ENCODE measurements at regions of chr13 and their contacts with region 1.

Region 1: GRCh38 chr13:32905063-32905863 is 111.0 kb upstream of the KL start:
- DNase-seq: peak; percentile 3
- ATAC-seq: no peak
- H3K4me3 ChIP-seq: no peak overlapping the region
- H3K27ac ChIP-seq: no peak overlapping the region
- H3K4me1 ChIP-seq: no peaks in the 10 kb centered on the region
- H3K27me3 ChIP-seq: no peaks in the 10 kb centered on the region
- CTCF ChIP-seq: no peak
- POLR2A ChIP-seq: no peak
- RAD21 ChIP-seq: no peak

Region 2: DNA sequence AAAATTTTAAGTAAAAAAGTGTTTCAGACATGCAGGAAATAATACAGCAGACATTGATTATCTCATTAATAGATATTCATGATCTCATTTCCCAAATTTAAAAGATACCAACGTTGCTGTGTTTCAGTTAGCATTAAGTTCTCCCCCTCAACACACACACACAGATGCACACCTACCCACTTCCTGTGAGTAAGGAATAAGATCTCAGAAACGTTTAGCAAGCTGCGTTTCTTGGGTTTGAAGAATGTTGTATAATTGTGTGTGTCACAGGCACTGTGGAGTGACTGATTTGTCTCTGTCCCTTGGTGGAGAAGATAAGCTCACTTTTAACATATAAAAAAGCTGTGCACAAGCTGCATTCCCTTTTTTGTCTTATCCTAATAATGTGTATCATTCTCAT is 122.2 kb before region 1 on chr13:
- CTCF ChIA-PET with region 1: no interaction called
- POLR2A ChIA-PET with region 1: no interaction called
- dilution Hi-C with region 1: no loop called
- in situ Hi-C with region 1: no loop called
- intact Hi-C with region 1: loop called (anchors 10 kb)
- DNase-seq: peak; percentile 67
- ATAC-seq: peak; percentile 49
- H3K4me3 ChIP-seq: no peak overlapping the region
- H3K27ac ChIP-seq: no peak overlapping the region
- H3K4me1 ChIP-seq: no peaks in the 10 kb centered on the region; the same call in 1 of the 2 replicates
- H3K27me3 ChIP-seq: no peaks in the 10 kb centered on the region
- CTCF ChIP-seq: no peak
- POLR2A ChIP-seq: no peak
- RAD21 ChIP-seq: no peak

Region 3: DNA sequence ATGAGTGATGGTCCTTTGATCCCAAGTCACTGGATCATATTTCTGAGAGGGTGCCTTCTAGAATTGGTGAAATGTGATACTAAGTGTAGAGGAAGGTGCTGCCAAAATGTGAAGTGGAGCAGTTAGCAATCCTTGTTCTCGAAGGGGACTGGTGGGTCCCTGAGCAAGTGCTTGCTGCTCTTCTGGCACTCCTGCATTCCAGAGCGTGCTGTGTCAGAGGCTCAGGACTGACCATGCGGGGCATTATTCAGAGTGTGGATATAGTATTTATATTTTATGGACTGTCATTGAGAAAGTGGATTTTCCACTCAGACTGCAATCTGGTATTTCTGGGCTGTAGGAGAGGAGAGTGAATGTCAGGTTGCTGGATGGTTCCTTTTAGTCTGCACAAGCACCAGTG is 41.7 kb before region 1 on chr13:
- CTCF ChIA-PET with region 1: no interaction called
- POLR2A ChIA-PET with region 1: no interaction called
- dilution Hi-C with region 1: no loop called
- in situ Hi-C with region 1: no loop called
- intact Hi-C with region 1: no loop called
- DNase-seq: no peak
- ATAC-seq: no peak
- H3K4me3 ChIP-seq: no peak overlapping the region
- H3K27ac ChIP-seq: no peak overlapping the region
- H3K4me1 ChIP-seq: no peaks in the 10 kb centered on the region
- H3K27me3 ChIP-seq: peaks cover 3% of the 10 kb centered on the region; the same call in 1 of the 2 replicates
- CTCF ChIP-seq: no peak
- POLR2A ChIP-seq: no peak
- RAD21 ChIP-seq: no peak

Measured in IMR-90 (cell line).